ENCODE measurements at regions of chr10 and their contacts with region 1.

Region 1: GRCh38 chr10:101611096-101611905 is 23.2 kb downstream of the DPCD start:
- DNase-seq: no peak
- ATAC-seq: peak in 2 of 4 donors; percentile 25 to 29
- H3K4me3 ChIP-seq: no peak overlapping the region
- H3K27ac ChIP-seq: no peak overlapping the region
- H3K4me1 ChIP-seq: no peaks in the 10 kb centered on the region
- H3K27me3 ChIP-seq: no peaks in the 10 kb centered on the region
- CTCF ChIP-seq: no peak

Region 2: DNA sequence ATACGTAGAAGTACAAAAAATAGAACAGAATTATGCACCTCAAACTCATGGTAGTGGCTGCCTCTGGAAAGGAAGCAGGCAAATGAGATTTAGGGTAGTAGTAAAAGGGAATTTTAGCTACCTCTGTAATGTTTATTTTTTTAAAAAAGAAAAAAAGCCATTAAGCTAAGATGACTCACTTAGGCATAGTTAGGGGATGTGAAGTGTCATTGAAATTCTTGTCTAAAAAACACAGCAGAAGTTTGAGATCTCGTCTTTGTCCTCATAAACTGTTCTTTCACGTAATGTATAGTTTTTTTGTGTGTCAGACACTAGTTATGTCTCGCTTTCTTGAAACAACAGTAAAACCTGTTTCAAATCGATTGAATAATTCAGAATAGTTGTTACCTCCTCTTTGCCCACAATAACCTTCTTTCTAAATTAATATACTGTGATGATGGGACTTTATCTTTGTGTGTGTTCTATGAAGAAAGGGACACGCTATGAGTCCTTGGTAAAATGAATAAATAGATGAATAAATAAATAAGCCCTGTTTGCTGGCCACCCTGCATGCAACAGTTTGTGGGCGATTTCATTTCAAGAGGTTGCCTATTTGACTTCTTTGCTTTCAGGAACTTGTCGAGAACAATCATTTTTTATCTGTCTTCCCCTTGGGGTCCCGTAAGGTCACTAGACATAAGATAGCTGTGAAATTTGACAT is 98.2 kb after region 1 on chr10:
- intact Hi-C with region 1: loop called in 1 of 2 experiments (anchors 5 kb)
- DNase-seq: no peak
- ATAC-seq: no peak
- H3K4me3 ChIP-seq: no peak overlapping the region
- H3K27ac ChIP-seq: no peak overlapping the region
- H3K4me1 ChIP-seq: no peaks in the 10 kb centered on the region
- H3K27me3 ChIP-seq: no peaks in the 10 kb centered on the region
- CTCF ChIP-seq: no peak

Region 3: DNA sequence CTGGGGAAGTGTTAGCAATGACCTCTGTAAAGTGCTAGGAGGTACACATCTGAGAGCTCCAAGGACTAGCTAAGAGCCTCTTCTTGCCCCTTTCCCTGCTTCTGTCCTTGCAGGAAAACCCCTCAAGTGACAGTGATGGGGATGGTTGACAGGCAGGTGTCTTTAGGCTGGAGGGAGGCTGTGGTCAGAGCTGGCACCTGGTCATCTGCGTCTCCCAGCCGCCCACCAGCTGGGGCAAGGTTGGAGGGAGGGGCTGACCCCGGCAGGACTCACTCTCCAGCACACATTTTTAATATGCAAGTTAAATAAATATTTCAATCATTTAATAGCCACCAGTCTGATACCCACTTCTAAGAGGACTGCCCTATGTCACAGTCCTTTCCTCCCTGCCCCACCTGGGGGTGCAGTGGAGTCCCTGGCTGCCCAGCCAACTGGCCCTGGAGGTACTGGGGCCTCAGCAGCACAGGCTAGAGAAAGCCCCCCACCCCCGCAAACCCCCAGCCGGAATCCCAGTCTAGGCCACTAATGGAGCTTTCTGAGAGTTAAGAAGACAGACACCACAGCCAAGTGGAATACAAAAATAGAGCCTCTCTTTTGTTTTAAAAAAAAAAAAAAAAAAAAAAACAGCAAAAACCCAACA is 158.4 kb after region 1 on chr10:
- intact Hi-C with region 1: loop called in 1 of 2 experiments (anchors 5 kb)
- DNase-seq: no peak
- ATAC-seq: no peak
- H3K4me3 ChIP-seq: no peak overlapping the region
- H3K27ac ChIP-seq: no peak overlapping the region
- H3K4me1 ChIP-seq: no peaks in the 10 kb centered on the region
- H3K27me3 ChIP-seq: peaks cover 0 to 50% (median 18%) of the 10 kb centered on the region in 3 donors
- CTCF ChIP-seq: no peak

Measured in psoas muscle (tissue), 8 donors.